ENCODE measurements at regions of chr5 and their contacts with region 1.

Region 1: GRCh38 chr5:126544087-126544740 is 50.8 kb downstream of the ALDH7A1 start:
- DNase-seq: peak in 5 of 9 donors; percentile 14 to 30 (median 28)
- ATAC-seq: peak; percentile 48
- H3K4me3 ChIP-seq: no peak overlapping the region
- H3K4me3 Mint-ChIP-seq: no peak overlapping the region
- H3K27ac ChIP-seq: no peak overlapping the region
- H3K27ac Mint-ChIP-seq: peak overlapping the region in 1 of 9 donors; percentile 12
- H3K4me1 ChIP-seq: no peaks in the 10 kb centered on the region
- H3K4me1 Mint-ChIP-seq: no peaks in the 10 kb centered on the region
- H3K27me3 ChIP-seq: no peaks in the 10 kb centered on the region
- H3K27me3 Mint-ChIP-seq: peaks cover 0 to 6% (median 0%) of the 10 kb centered on the region in 5 donors

Region 2: DNA sequence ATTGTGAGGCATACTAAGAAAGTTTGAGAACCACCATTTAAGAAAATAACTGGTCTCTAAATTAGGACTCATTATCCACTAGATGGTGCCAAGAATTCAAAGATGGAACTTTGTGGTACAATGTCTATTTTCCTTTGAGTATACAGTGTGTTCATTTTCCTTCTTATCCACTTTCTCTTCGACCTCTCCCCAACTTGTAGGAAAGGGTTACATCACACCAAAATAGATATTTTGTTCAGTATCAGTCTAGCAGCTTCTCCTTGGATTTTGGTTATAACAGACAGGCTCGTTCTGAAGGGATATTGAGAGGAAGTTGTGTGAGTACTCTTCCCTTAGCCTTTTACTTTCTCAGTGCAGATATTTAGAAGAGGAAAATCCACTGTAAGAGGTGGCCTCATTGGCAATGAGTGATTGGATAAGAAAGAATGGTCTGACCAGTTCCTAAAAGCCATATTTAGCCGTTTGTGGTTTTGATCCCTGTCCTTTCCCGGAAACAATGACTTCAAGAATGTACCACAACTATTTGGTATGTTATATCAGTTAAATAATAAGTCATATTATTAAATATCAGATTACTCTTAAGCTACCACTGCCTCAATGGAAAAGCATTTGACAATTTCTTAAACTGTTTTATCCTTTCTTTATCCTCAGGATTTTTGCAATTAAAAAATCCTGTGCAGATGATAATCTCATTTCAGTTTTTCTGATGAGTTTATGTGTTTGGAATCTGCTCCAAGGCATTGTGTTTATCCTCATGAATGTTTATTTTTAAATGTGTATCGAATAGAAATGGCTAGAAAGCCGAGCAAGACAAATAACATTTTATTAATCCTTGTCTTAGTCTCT is 190.0 kb before region 1 on chr5:
- CTCF ChIA-PET with region 1: interaction called, 48 read pairs
- POLR2A ChIA-PET with region 1: no interaction called
- intact Hi-C with region 1: loop called (anchors 1 kb)
- DNase-seq: peak in 7 of 9 donors; percentile 26 to 66 (median 53)
- ATAC-seq: peak; percentile 78
- H3K4me3 ChIP-seq: no peak overlapping the region
- H3K4me3 Mint-ChIP-seq: peak overlapping the region; percentile 12 to 80 (median 72)
- H3K27ac ChIP-seq: no peak overlapping the region
- H3K27ac Mint-ChIP-seq: peak overlapping the region in 7 of 9 donors; percentile 19 to 65 (median 36)
- H3K4me1 ChIP-seq: peaks cover 0 to 12% of the 10 kb centered on the region in 2 donors
- H3K4me1 Mint-ChIP-seq: peaks cover 3 to 21% (median 15%) of the 10 kb centered on the region in 7 donors
- H3K27me3 ChIP-seq: no peaks in the 10 kb centered on the region
- H3K27me3 Mint-ChIP-seq: peaks cover 0 to 16% (median 0%) of the 10 kb centered on the region in 5 donors

Region 3: DNA sequence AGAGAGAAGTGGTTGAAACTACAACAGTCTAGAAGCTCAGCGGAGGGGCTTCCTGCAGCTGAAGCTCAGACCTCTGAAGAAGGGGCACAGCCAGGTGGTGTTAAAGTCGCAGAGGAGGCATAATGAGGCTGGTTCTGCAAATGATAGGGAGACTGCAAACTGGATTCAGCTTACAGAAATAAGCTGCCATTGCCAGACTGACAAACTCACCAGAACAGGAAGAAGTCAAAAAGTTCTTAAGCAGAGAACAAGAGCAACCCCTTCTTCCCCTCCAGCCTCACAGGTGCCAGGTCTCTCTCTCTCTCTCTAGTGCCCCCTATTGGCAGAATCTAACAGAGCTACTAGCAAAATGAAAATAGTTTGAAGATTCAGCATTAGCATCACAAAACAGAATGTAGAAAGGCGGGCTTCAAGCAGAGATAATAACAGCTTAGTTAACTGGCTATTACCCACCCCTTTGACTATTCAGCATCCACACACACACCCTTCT is 44.3 kb before region 1 on chr5:
- CTCF ChIA-PET with region 1: interaction called, 20 read pairs
- POLR2A ChIA-PET with region 1: no interaction called
- intact Hi-C with region 1: loop called (anchors 1 kb)
- DNase-seq: peak in 7 of 9 donors; percentile 36 to 84 (median 78)
- ATAC-seq: peak; percentile 88
- H3K4me3 ChIP-seq: no peak overlapping the region
- H3K4me3 Mint-ChIP-seq: peak overlapping the region in 5 of 10 donors; percentile 10 to 54 (median 24)
- H3K27ac ChIP-seq: no peak overlapping the region
- H3K27ac Mint-ChIP-seq: peak overlapping the region in 8 of 9 donors; percentile 22 to 88 (median 76)
- H3K4me1 ChIP-seq: peaks cover 0 to 25% of the 10 kb centered on the region in 2 donors
- H3K4me1 Mint-ChIP-seq: peaks cover 4 to 58% (median 44%) of the 10 kb centered on the region in 7 donors
- H3K27me3 ChIP-seq: no peaks in the 10 kb centered on the region
- H3K27me3 Mint-ChIP-seq: no peaks in the 10 kb centered on the region

Region 4: GRCh38 chr5:126801992-126802294 is 257.7 kb after region 1 on chr5:
- CTCF ChIA-PET with region 1: no interaction called
- POLR2A ChIA-PET with region 1: no interaction called
- intact Hi-C with region 1: loop called (anchors 1 to 10 kb)
- DNase-seq: peak in 3 of 9 donors; percentile 5 to 33 (median 32)
- ATAC-seq: peak; percentile 61
- H3K4me3 ChIP-seq: no peak overlapping the region
- H3K4me3 Mint-ChIP-seq: no peak overlapping the region
- H3K27ac ChIP-seq: no peak overlapping the region
- H3K27ac Mint-ChIP-seq: peak overlapping the region in 2 of 9 donors; percentile 24 to 28
- H3K4me1 ChIP-seq: peaks cover 5 to 7% of the 10 kb centered on the region in 2 donors
- H3K4me1 Mint-ChIP-seq: peaks cover 18 to 58% (median 27%) of the 10 kb centered on the region in 7 donors
- H3K27me3 ChIP-seq: no peaks in the 10 kb centered on the region
- H3K27me3 Mint-ChIP-seq: no peaks in the 10 kb centered on the region